Psoas muscle (tissue), 8 donors: ENCODE measurements at regions of chr1 and their contacts with region 1.

Region 1: DNA sequence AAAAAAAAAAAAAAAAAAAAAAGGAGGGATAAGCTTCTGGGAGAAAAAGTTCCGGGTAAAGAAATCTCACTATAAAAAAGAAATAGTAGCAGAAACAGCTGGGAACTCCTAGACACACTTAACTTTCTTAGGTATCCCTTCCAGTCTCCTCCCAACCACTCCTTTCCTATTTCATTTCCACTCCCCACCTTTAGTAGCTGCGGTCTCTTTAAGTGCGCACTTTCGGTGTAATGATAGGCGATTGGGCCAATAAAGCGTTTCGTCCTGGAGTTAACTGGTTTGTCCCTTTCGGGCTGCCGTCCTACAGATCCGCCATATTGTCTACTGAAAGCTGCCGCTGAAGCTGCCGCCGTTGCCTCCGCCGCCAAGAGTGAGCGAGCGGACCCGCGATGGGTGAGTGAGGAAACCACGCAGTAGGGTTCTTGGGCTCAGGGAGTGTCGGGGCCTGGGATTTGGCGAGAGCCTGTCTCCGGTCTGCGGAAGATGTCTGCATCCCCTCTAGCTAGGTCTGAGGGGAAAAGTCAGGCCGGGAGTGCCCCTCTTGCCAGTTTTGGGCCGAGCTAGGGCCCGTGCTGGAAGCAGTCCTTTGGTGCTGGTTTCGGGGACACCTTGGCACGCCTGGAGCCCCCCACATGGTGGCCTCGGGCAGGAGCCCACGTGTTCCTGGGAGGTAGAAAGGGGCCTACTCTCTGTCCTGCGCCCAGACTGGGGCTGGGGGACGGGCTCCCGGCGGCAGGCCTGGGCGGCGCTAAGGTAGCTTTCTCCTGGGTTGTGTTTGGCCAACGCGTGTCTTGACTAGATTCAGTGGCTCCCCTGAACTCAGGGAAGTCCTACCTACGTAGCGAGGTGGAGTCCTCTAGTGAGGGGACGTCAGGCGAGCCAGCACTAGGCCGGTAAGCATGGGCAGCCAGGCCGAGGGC is at the start of gene KPNA6:
- DNase-seq: peak; percentile 91 to 93
- ATAC-seq: peak; percentile 91 to 92 (median 91)
- H3K4me3 ChIP-seq: peak within 1 kb of the TSS; percentile 99
- H3K27ac ChIP-seq: peak within 1 kb of the TSS; percentile 94
- H3K4me1 ChIP-seq: peaks cover 28% of the 10 kb centered on the region
- H3K27me3 ChIP-seq: no peaks in the 10 kb centered on the region
- CTCF ChIP-seq: no peak
- total RNA-seq, gene KPNA6: 67.4 to 98.3 (median 91.9) TPM

Region 2: GRCh38 chr1:32072622-32073298 is 35.2 kb before region 1 on chr1 and contains the start of gene TMEM39B:
- intact Hi-C with region 1: loop called (anchors 2 kb)
- DNase-seq: peak; percentile 96 to 98
- ATAC-seq: peak; percentile 94 to 96 (median 94)
- H3K4me3 ChIP-seq: peak within 1 kb of the TSS; percentile 70
- H3K27ac ChIP-seq: peak within 1 kb of the TSS; percentile 81
- H3K4me1 ChIP-seq: peaks cover 14% of the 10 kb centered on the region
- H3K27me3 ChIP-seq: no peaks in the 10 kb centered on the region
- CTCF ChIP-seq: no peak
- total RNA-seq, gene TMEM39B: 7.2 to 11.5 (median 9.6) TPM

Region 3: DNA sequence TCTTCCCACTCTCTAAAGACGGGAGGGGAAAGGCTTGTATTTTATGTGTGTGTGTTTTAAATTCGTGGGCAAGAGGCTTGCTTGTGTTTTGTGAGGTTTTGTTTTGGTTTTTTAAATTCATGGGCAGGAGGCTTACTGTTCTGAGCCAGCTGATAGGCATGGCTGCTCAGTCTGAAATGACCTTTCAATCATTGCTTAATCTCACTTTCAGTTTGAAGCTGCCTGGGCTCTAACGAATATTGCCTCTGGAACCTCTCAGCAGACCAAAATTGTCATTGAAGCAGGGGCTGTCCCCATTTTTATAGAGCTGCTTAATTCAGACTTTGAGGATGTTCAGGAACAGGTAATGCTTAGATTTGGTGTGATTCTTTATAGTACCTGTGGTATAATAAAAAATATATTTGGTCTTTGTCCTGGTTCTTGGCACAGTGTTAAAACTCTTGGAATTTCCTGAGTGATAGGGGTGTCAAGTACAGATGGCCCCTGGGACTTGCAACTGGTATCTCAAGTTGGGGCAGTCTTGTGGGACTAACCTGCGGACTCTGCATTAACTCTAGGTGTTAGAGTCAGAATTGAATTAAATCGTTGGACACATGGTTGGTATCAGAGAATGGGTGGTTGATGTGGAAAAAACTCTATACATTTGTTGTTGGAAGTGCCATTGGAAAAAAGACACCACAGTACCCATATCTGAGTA is 51.3 kb after region 1 on chr1:
- intact Hi-C with region 1: loop called in 1 of 2 experiments (anchors 5 kb)
- DNase-seq: no peak
- ATAC-seq: no peak
- H3K4me3 ChIP-seq: no peak overlapping the region
- H3K27ac ChIP-seq: no peak overlapping the region
- H3K4me1 ChIP-seq: no peaks in the 10 kb centered on the region
- H3K27me3 ChIP-seq: no peaks in the 10 kb centered on the region
- CTCF ChIP-seq: no peak

Region 4: DNA sequence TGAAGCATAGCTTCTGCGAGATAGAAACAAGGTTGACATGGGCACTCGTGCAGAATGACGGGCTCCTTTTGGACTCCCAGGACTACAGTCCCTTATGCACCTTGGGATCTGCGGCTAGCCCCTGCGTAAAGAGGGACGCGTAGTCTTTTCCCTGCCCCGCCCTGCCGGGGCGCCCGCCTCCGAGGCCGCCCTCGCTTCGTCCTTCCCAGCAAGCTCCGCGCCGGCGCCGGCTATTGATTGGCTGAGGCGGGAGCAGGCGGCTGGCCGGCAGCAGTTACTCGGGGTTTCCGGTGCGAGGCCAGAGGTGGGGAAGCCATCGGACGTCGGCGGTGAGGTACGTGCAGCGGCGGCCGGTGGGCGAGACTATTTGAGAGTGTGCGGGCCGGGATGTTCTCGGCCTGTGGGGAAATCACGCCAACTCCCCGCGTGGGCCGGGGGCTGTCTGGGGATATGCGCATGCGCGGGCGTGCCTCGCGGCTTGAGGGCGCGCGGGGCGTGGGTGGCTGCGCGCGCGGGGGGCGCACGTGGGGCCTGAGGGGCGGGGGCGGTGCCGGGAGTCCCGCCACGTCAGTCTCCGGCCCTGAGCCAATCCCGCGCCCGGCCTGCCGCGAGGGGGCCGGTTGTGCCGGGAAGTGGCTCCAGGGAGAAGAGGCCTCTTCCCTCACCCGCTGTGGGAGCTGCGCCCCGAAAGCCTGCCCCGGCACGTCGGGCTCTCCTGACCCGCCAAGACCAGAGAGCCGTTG is 71.6 kb after region 1 on chr1 and contains the start of gene TXLNA:
- intact Hi-C with region 1: loop called in 1 of 2 experiments (anchors 5 kb)
- DNase-seq: peak; percentile 96 to 97
- ATAC-seq: peak; percentile 90 to 95 (median 92)
- H3K4me3 ChIP-seq: peak within 1 kb of the TSS; percentile 81
- H3K27ac ChIP-seq: peak within 1 kb of the TSS; percentile 98
- H3K4me1 ChIP-seq: peaks cover 39% of the 10 kb centered on the region
- H3K27me3 ChIP-seq: no peaks in the 10 kb centered on the region
- CTCF ChIP-seq: no peak
- total RNA-seq, gene TXLNA: 12.9 to 21.5 (median 19.7) TPM